Stomach (tissue), 19 donors: ENCODE measurements at regions of chr3 and their contacts with region 1.

Region 1: GRCh38 chr3:14402304-14402811 is at the start of gene SLC6A6:
- DNase-seq: peak; percentile 98
- H3K4me3 ChIP-seq: peak within 1 kb of the TSS; percentile 61 to 87 (median 82)
- H3K27ac ChIP-seq: peak within 1 kb of the TSS; percentile 91 to 95 (median 93)
- H3K4me1 ChIP-seq: peaks cover 39 to 65% (median 48%) of the 10 kb centered on the region in 4 donors
- H3K27me3 ChIP-seq: no peaks in the 10 kb centered on the region
- CTCF ChIP-seq: peak in 4 of 7 experiments; percentile 18 to 79 (median 48)
- EP300 ChIP-seq: no peak
- POLR2A ChIP-seq: no peak
- total RNA-seq, gene SLC6A6: 15.6 to 36.7 (median 28.0) TPM

Region 2: DNA sequence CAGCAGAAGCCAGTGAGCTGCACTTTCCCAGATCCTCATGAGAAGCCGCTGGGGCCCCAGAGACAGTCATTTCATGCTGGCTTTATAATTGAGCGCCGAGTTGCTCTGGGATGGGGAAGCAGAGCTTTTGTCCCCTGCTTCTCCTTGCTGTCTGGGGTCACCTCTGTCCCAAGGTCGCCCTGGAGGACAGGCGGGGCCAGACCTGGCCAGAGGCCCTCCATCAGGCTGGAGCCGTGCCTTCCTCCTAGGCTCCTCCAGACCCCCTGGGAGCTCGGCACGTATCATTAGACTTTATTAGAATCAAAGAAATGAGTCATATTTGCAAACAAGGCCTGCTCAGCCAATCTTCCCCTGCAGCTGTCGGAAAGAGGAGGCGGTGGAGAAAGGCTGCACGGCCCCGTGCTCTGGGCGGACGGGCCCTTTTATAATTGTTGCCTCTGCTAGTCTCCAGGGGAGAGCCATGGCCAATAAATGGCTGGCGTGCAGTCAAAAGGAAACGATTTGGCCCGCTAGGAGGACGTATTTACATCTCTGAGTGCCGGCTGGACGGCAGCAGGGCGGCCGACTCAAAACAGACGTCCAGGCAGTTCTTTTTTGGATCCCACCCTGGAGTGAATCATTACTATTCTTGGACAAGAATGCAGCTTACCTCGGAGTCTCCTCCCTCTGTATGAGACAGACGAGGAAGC is 50.5 kb after region 1 on chr3:
- intact Hi-C with region 1: loop called (anchors 10 kb)
- DNase-seq: peak; percentile 94 to 97
- H3K4me3 ChIP-seq: no peak overlapping the region
- H3K27ac ChIP-seq: peak overlapping the region; percentile 87 to 92 (median 90)
- H3K4me1 ChIP-seq: peaks cover 41 to 67% (median 52%) of the 10 kb centered on the region in 4 donors
- H3K27me3 ChIP-seq: no peaks in the 10 kb centered on the region
- CTCF ChIP-seq: peak in 3 of 7 experiments; percentile 24 to 30 (median 27)
- EP300 ChIP-seq: no peak
- POLR2A ChIP-seq: no peak